Mammary epithelial cell (primary cell): ENCODE measurements at regions of chrX and their contacts with region 1.

Region 1: GRCh38 chrX:12269484-12269883 is 131.2 kb downstream of the FRMPD4 start:
- DNase-seq: no peak
- H3K4me3 ChIP-seq: no peak overlapping the region
- H3K27ac ChIP-seq: no peak overlapping the region
- H3K4me1 ChIP-seq: no peaks in the 10 kb centered on the region
- H3K27me3 ChIP-seq: no peaks in the 10 kb centered on the region
- CTCF ChIP-seq: peak; percentile 12 to 43

Region 2: DNA sequence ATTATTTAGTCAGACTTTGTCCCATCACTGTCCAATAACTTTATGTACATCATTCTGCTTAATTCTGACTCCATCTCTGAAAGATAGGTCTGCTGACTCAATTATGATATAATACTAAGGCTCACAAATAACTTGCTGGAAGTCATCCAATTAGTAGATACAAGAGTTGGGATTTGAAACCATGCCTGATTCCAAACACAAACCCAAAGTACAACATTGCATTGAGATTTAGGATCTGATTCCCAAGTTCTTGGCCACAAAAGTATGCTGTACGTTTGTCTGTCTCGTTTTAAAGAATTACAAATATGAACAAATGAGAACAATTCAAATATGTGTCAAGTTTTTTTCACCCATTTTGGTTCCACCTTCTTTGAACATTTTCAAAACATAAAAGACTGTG is 867.5 kb before region 1 on chrX:
- CTCF ChIA-PET with region 1: interaction called, 10 read pairs
- dilution Hi-C with region 1: no loop called
- in situ Hi-C with region 1: no loop called
- intact Hi-C with region 1: no loop called
- DNase-seq: no peak
- H3K4me3 ChIP-seq: no peak overlapping the region
- H3K27ac ChIP-seq: no peak overlapping the region
- H3K4me1 ChIP-seq: no peaks in the 10 kb centered on the region
- H3K27me3 ChIP-seq: peaks cover 4% of the 10 kb centered on the region
- CTCF ChIP-seq: no peak

Region 3: GRCh38 chrX:14029425-14030173 is 1760.1 kb after region 1 on chrX and contains the start of gene GEMIN8:
- CTCF ChIA-PET with region 1: no interaction called
- dilution Hi-C with region 1: no loop called
- in situ Hi-C with region 1: no loop called
- intact Hi-C with region 1: no loop called
- DNase-seq: peak; percentile 93
- H3K4me3 ChIP-seq: peak within 1 kb of the TSS; percentile 55 to 85 (median 58)
- H3K27ac ChIP-seq: peak within 1 kb of the TSS; percentile 87
- H3K4me1 ChIP-seq: peaks cover 49% of the 10 kb centered on the region
- H3K27me3 ChIP-seq: no peaks in the 10 kb centered on the region
- CTCF ChIP-seq: no peak
- total RNA-seq, gene GEMIN8: 14.7 to 25.9 TPM